Natural killer cell (primary cell): ENCODE measurements at regions of chr11 and their contacts with region 1.

Region 1: DNA sequence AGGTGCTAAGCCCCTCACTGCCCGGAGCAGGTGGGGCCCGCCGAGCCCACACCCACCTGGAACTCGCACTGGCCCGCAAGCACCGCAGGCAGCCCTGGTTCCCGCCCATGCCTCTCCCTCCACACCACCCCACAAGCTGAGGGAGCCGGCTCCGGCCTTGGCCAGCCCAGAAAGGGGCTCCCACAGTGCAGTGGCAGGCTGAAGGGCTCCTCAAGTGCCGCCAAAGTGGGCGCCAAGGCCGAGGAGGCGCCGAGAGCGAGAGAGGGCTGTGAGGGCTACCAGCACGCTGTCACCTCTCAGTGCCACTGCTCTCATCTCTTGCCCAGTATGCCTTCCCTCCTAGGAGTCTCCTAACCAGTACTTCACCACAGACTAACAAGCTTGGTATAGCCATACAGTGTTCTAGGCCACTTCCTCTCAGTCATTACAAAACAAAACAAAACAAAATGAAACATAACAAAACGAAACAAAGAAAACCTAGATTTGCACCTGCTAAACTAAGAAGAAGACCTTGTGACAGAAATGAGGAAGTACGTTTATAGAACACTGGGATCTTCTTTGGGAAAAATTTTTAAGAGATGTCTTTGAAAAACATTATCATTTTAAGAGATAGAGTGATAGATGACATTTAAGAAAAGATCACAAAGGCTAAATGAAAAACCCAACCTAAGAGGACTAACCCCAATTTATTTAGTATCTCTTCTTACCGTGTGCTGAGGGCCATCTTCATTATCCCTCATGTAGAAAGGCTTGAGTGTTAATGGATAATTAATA is 47.7 kb upstream of the GAB2 start:
- DNase-seq: peak; percentile 41 to 64
- ATAC-seq: peak; percentile 97 to 100 (median 98)
- H3K4me3 ChIP-seq: peak overlapping the region; percentile 32
- H3K4me3 Mint-ChIP-seq: peak overlapping the region; percentile 61
- H3K27ac ChIP-seq: peak overlapping the region; percentile 92
- H3K27ac Mint-ChIP-seq: peak overlapping the region; percentile 86 to 91
- H3K4me1 ChIP-seq: peaks cover 11% of the 10 kb centered on the region
- H3K4me1 Mint-ChIP-seq: peaks cover 10 to 11% of the 10 kb centered on the region in 2 donors
- H3K27me3 ChIP-seq: no peaks in the 10 kb centered on the region
- H3K27me3 Mint-ChIP-seq: no peaks in the 10 kb centered on the region
- CTCF ChIP-seq: no peak

Region 2: DNA sequence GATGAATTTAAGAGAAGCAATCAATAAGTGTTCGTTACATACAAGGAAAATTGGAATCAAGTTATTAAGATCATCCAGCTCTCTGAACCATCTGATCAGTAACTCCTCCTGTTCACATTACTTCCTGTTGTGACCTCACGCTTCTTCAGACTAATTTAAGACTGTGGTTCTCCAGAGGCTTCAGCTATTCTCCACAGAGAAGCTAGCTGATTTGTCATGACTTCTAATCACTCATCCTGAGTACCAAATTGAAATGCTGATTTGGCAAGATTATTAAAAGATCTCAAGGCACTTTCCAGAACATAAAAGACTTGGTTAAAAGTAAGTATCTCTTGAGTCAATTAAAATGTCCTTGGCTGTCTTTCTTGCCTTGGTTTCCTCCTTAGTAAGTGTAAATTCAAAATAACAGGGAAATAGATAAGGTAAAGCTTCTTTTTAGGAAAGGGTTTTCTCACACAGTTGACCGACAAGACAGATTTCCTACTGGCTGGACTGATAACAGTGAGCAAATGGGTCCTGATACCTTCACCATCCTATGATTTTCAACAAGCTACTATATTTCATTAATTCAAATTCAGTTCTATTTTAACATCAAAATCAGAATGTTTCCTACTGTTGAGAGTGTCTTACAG is 86.2 kb before region 1 on chr11:
- intact Hi-C with region 1: no loop called
- DNase-seq: no peak
- ATAC-seq: no peak
- H3K4me3 ChIP-seq: no peak overlapping the region
- H3K4me3 Mint-ChIP-seq: no peak overlapping the region
- H3K27ac ChIP-seq: no peak overlapping the region
- H3K27ac Mint-ChIP-seq: no peak overlapping the region
- H3K4me1 ChIP-seq: no peaks in the 10 kb centered on the region
- H3K4me1 Mint-ChIP-seq: peaks cover 0 to 6% of the 10 kb centered on the region in 2 donors
- H3K27me3 ChIP-seq: no peaks in the 10 kb centered on the region
- H3K27me3 Mint-ChIP-seq: no peaks in the 10 kb centered on the region
- CTCF ChIP-seq: no peak

Region 3: DNA sequence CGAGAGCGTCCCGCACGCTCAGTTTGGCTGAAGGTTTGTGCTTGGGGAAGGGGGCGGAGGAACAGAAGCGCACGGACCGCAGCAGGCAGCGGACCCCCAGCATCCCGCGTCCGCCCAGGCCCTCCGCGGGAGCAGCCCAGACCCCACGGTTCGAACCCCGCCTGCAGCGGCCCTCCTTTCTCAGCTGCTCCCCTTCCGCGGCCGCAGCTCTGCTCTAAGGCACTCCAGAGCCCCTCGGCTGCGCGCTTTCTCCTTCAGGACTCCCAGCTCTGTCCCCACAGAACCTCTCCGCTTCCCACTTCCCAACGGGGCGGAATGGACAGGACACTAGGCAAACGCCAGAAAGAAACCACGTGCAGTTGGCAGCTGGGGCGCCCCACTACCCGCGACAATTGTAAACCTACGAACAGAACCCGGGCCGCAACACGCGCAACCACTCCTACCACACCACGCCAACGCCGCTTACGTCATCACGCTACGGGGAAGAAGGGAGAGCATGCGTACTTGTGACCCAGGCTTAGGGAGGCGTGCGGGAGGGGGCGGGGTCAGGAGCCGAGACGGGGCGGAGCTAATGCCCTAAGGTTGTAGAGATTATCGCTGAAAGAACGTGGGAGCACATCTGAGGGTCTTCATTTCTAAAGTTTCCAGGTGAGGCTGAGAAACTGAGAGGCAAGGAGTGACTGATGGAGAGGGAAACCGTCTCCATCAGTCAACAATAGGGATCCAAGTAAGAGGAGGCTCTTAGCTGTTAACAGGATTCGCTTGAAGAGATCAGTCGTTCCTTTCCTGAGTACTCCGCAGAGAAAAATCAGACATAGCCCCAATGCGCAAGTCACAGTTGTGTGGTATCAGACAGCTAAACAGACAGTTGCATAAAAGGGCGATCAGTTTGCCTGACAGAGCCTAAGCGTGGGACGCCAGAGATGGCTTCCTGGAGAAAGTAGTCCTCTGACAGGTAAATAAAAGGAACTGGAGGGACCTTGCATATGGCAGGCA is 109.3 kb after region 1 on chr11 and contains the start of gene NARS2:
- intact Hi-C with region 1: loop called (anchors 1 kb)
- DNase-seq: peak; percentile 92 to 99
- ATAC-seq: peak; percentile 97 to 99 (median 98)
- H3K4me3 ChIP-seq: peak within 1 kb of the TSS; percentile 86
- H3K4me3 Mint-ChIP-seq: peak within 1 kb of the TSS; percentile 98
- H3K27ac ChIP-seq: peak within 1 kb of the TSS; percentile 84
- H3K27ac Mint-ChIP-seq: peak within 1 kb of the TSS; percentile 94 to 97
- H3K4me1 ChIP-seq: peaks cover 7% of the 10 kb centered on the region
- H3K4me1 Mint-ChIP-seq: peaks cover 24 to 25% of the 10 kb centered on the region in 2 donors
- H3K27me3 ChIP-seq: no peaks in the 10 kb centered on the region
- H3K27me3 Mint-ChIP-seq: no peaks in the 10 kb centered on the region
- CTCF ChIP-seq: no peak
- total RNA-seq, gene NARS2: 6.5 to 9.6 (median 8.8) TPM